Ascending aorta (tissue), 2 donors: ENCODE measurements at regions of chr20 and their contacts with region 1.

Region 1: GRCh38 chr20:19947611-19948264 is 69.4 kb upstream of the NAA20 start:
- DNase-seq: no peak
- H3K4me3 ChIP-seq: no peak overlapping the region
- H3K27ac ChIP-seq: peak overlapping the region; percentile 78 to 94
- H3K4me1 ChIP-seq: peaks cover 13 to 26% of the 10 kb centered on the region in 2 donors
- H3K27me3 ChIP-seq: no peaks in the 10 kb centered on the region
- CTCF ChIP-seq: no peak

Region 2: DNA sequence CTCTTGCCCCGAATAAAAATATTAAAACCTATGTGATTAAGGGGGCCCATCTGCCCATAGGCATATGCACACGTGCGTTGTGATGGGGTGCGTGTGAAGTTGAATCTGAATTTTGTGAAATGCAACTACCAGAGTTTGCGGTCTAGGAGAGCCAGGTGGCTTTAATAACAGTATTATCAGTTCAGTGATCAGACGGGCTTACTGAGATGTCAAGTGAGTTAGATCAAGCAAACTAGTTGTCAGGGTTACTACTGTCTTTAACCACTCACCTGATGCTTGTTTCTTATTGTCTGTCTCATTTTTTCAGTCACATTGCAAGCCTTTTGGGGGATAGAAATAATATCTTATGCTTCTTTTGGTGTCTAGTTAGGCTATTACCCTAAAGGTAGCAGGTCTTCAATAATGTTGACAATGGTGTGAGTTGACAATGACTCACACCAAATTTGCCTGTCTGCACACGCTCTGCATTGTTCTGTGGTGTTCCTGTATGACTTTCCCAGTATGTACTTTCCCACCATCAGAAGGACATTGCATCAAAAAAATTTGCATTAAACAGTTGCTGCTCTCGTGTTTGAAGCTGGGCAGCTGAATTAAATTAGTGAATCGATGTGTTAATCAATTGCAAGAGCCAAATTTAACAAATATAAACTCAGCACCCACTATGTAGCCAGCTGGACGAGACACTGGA is 33.7 kb before region 1 on chr20:
- intact Hi-C with region 1: no loop called
- DNase-seq: no peak
- H3K4me3 ChIP-seq: no peak overlapping the region
- H3K27ac ChIP-seq: no peak overlapping the region
- H3K4me1 ChIP-seq: peaks cover 0 to 10% of the 10 kb centered on the region in 2 donors
- H3K27me3 ChIP-seq: no peaks in the 10 kb centered on the region
- CTCF ChIP-seq: no peak

Region 3: GRCh38 chr20:19974626-19975435 is 27.1 kb after region 1 on chr20:
- intact Hi-C with region 1: loop called (anchors 1 kb)
- DNase-seq: peak; percentile 78 to 96
- H3K4me3 ChIP-seq: peak overlapping the region; percentile 60 to 69
- H3K27ac ChIP-seq: peak overlapping the region; percentile 90
- H3K4me1 ChIP-seq: peaks cover 23 to 46% of the 10 kb centered on the region in 2 donors
- H3K27me3 ChIP-seq: no peaks in the 10 kb centered on the region
- CTCF ChIP-seq: no peak